Heart left ventricle (tissue), 16 donors: ENCODE measurements at regions of chr1 and their contacts with region 1.

Region 1: GRCh38 chr1:236862615-236863211 is 67.6 kb downstream of the MTR start:
- DNase-seq: peak in 4 of 5 donors; percentile 22 to 71 (median 50)
- ATAC-seq: peak; percentile 85 to 91 (median 88)
- H3K4me3 ChIP-seq: no peak overlapping the region
- H3K27ac ChIP-seq: peak overlapping the region; percentile 60 to 79 (median 70)
- H3K4me1 ChIP-seq: peaks cover 0 to 39% (median 12%) of the 10 kb centered on the region in 12 donors
- H3K27me3 ChIP-seq: no peaks in the 10 kb centered on the region
- CTCF ChIP-seq: no peak
- POLR2A ChIP-seq: no peak

Region 2: GRCh38 chr1:236830560-236830959 is 32.2 kb before region 1 on chr1:
- intact Hi-C with region 1: loop called in 1 of 10 experiments (anchors 1 kb)
- DNase-seq: peak; percentile 63 to 78 (median 67)
- ATAC-seq: peak; percentile 95 to 98 (median 96)
- H3K4me3 ChIP-seq: peak overlapping the region in 1 of 12 donors; percentile 3
- H3K27ac ChIP-seq: peak overlapping the region in 10 of 12 donors; percentile 16 to 78 (median 58)
- H3K4me1 ChIP-seq: peaks cover 0 to 27% (median 9%) of the 10 kb centered on the region in 12 donors
- H3K27me3 ChIP-seq: no peaks in the 10 kb centered on the region
- CTCF ChIP-seq: no peak
- POLR2A ChIP-seq: no peak

Region 3: DNA sequence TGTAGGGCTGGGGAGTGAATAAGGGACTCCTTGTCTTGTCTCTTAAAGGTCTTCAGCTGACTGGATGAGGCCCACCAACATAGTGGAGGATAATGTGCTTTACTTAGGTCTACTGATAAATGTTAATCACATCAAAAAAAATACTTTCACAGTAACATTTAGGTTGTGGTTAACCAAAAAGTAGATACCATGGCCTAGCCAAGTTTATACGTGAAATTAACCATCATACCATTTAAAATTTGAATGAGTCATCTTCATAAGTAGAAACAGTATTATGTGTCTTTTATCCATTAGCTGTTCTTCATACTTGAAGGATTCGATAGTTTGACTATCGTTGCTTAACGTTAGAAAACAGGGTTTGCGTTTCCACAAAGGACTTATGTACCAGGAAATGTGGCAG is 13.3 kb after region 1 on chr1:
- intact Hi-C with region 1: no loop called
- DNase-seq: no peak
- ATAC-seq: no peak
- H3K4me3 ChIP-seq: no peak overlapping the region
- H3K27ac ChIP-seq: no peak overlapping the region
- H3K4me1 ChIP-seq: peaks cover 0 to 25% (median 11%) of the 10 kb centered on the region in 12 donors
- H3K27me3 ChIP-seq: no peaks in the 10 kb centered on the region
- CTCF ChIP-seq: no peak
- POLR2A ChIP-seq: no peak

Region 4: DNA sequence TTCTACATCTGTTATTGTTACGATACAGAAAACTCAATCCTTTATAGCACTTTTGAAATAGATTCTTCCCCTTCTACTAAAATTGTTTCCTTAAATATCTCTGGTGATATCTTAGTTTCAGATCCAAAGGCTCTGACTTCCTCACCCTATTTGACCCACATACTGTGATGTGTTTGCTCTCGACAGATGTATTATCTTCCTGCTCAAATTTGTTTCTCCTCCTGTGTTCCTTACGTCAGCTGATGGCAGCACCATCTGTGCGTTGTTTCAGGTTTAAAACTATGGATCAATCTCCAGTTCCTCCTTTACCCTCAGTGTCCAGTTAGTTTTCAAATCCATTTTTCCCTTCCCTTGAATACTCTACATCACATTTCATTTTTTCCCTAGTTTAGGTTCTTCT is 453.6 kb after region 1 on chr1:
- intact Hi-C with region 1: no loop called
- DNase-seq: no peak
- ATAC-seq: peak in 1 of 4 donors; percentile 15
- H3K4me3 ChIP-seq: no peak overlapping the region
- H3K27ac ChIP-seq: peak overlapping the region in 2 of 12 donors; percentile 28 to 50
- H3K4me1 ChIP-seq: peaks cover 0 to 55% (median 11%) of the 10 kb centered on the region in 12 donors
- H3K27me3 ChIP-seq: no peaks in the 10 kb centered on the region
- CTCF ChIP-seq: no peak
- POLR2A ChIP-seq: no peak